Right ventricle myocardium inferior (tissue), 1 donor: ENCODE measurements at regions of chr2 and their contacts with region 1.

Region 1: GRCh38 chr2:219253753-219254590 is at the start of gene TUBA4A:
- DNase-seq: peak; percentile 95
- ATAC-seq: peak; percentile 92
- total RNA-seq, gene TUBA4A: 128 TPM

Region 2: GRCh38 chr2:219099329-219099728 is 154.6 kb before region 1 on chr2:
- intact Hi-C with region 1: no loop called
- DNase-seq: no peak
- ATAC-seq: no peak

Region 3: GRCh38 chr2:219294356-219295351 is 40.7 kb after region 1 on chr2:
- intact Hi-C with region 1: loop called (anchors 2 kb)
- DNase-seq: peak; percentile 96
- ATAC-seq: peak; percentile 92